H1 (cell line): ENCODE measurements at regions of chr4 and their contacts with region 1.

Region 1: DNA sequence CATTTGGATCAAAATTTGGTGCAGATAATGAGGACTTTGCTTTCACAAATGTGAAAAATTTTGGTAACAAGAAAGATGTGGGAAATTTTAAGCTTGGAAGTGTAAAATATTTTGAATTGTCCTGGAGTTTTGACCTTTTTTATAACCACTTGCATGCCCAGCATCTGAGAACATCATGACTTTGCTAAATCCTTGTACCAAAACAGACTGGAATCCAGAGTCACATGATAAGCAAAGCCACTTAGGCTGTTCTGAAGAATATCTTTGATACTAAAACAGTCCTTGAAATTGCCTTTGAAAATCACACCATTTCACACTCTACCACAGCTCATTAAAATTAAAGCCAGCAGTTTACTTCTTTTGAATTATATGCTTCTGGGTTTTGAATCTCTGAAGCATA is 2.5 kb upstream of the PPM1K start:
- DNase-seq: no peak
- H3K4me3 ChIP-seq: no peak overlapping the region
- H3K27ac ChIP-seq: no peak overlapping the region
- H3K4me1 ChIP-seq: peaks cover 0 to 5% (median 1%) of the 10 kb centered on the region in 4 experiments; a peak in 4 of 7 replicates
- H3K27me3 ChIP-seq: peaks cover 0 to 9% (median 5%) of the 10 kb centered on the region in 4 experiments; a peak in 4 of 7 replicates
- CTCF ChIP-seq: no peak
- EP300 ChIP-seq: no peak
- POLR2A ChIP-seq: no peak
- RAD21 ChIP-seq: no peak

Region 2: DNA sequence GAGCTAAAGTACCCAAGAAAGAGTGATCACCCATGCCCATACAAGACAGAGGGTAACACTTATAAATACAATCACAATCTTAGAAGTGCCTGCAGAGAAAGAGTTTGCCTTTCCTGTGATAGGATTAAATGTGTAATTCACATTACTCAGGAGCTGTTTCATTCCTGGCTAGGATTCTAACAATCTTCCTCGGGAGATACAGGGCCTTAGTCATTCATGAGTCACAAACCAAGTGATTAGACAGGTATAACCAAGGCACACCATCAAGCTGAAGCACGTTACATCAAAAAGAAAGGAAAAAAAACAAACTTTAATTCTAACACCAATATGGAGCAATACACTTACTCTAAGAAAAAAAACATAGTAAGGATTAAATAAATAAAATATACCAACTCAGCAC is 143.4 kb before region 1 on chr4:
- CTCF ChIA-PET with region 1: no interaction called
- POLR2A ChIA-PET with region 1: no interaction called
- DNase-seq: no peak
- H3K4me3 ChIP-seq: no peak overlapping the region; a peak in 1 of 8 replicates
- H3K27ac ChIP-seq: no peak overlapping the region
- H3K4me1 ChIP-seq: peaks cover 0 to 13% (median 8%) of the 10 kb centered on the region in 4 experiments; a peak in 4 of 7 replicates
- H3K27me3 ChIP-seq: no peaks in the 10 kb centered on the region
- CTCF ChIP-seq: no peak
- EP300 ChIP-seq: no peak
- POLR2A ChIP-seq: no peak
- RAD21 ChIP-seq: no peak

Region 3: GRCh38 chr4:88297725-88298454 is 11.0 kb after region 1 on chr4:
- CTCF ChIA-PET with region 1: interaction called, 16 read pairs
- POLR2A ChIA-PET with region 1: interaction called, 3 read pairs
- DNase-seq: no peak
- H3K4me3 ChIP-seq: no peak overlapping the region
- H3K27ac ChIP-seq: no peak overlapping the region
- H3K4me1 ChIP-seq: no peaks in the 10 kb centered on the region; a peak in 1 of 7 replicates
- H3K27me3 ChIP-seq: no peaks in the 10 kb centered on the region
- CTCF ChIP-seq: no peak
- EP300 ChIP-seq: no peak
- POLR2A ChIP-seq: no peak
- RAD21 ChIP-seq: no peak